Natural killer cell (primary cell): ENCODE measurements at regions of chr14 and their contacts with region 1.

Region 1: DNA sequence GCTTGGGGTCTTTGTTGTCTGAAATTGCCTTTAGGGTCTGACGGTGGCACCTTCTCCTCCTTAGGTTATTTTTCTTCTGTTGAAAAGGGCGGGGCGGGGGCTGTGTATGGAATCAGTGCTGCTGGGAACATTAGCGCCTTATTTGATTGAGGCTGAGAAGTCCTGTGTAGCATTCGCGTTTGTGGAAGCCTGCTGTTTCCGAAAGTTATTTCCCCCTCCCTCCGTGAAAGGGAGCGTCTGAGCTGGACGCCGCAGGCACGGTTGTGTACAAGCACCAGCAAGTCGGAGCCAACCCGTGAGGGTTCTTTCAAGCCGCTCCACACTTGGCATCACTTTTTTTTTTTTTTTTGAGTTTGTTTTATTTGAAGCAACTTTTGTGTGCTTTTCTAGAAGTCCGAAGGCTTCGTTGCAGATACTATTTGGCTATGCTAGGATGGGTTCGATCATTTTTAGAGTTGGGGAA is 1.1 kb downstream of the SYNE2 start:
- DNase-seq: peak; percentile 52 to 77
- ATAC-seq: peak; percentile 27 to 48 (median 32)
- H3K4me3 ChIP-seq: peak overlapping the region; percentile 65
- H3K4me3 Mint-ChIP-seq: peak overlapping the region; percentile 99
- H3K27ac ChIP-seq: peak overlapping the region; percentile 76
- H3K27ac Mint-ChIP-seq: peak overlapping the region; percentile 93 to 96
- H3K4me1 ChIP-seq: peaks cover 42% of the 10 kb centered on the region
- H3K4me1 Mint-ChIP-seq: peaks cover 42 to 48% of the 10 kb centered on the region in 2 donors
- H3K27me3 ChIP-seq: no peaks in the 10 kb centered on the region
- H3K27me3 Mint-ChIP-seq: no peaks in the 10 kb centered on the region
- CTCF ChIP-seq: no peak

Region 2: DNA sequence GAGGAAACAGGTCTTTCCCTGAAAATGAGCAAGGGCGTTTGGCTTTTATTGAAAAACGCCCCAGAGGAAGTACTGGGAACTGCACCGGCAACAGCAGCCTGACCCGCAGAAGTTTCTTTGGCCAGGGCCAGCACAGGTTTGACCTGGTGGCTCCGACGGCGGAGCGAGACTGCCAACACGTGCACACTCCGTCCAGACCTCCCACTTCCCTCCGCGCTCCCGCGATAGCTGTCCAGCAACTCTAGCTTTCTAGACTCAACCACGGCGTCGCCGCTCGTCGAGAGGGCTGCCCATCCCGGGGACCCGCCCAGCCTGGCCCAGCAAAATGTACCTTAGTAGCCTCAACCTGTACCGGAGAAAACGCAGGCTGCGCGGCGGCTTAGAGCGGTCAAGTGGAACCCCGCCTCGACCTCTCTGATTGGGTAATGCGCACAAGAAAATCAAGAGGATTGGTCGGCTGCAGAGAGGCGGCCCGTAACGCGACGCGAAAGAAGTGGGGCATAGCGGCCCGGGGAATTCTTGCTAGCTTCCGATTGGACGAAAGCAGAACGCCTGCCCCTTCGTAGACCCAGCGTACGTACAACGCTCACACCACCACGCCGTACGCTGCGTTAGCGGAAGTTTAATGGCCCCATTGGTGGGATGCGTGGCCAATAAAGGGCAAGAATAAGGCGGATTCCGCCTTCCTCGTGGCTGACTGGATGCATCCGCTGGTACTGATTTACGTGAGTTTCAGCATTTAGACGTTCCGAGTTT is 212.2 kb before region 1 on chr14 and contains the start of gene WDR89:
- intact Hi-C with region 1: loop called (anchors 2 kb)
- DNase-seq: peak; percentile 92 to 99
- ATAC-seq: peak; percentile 79 to 92 (median 81)
- H3K4me3 ChIP-seq: peak within 1 kb of the TSS; percentile 90
- H3K4me3 Mint-ChIP-seq: peak within 1 kb of the TSS; percentile 92
- H3K27ac ChIP-seq: peak within 1 kb of the TSS; percentile 99
- H3K27ac Mint-ChIP-seq: peak within 1 kb of the TSS; percentile 95 to 96
- H3K4me1 ChIP-seq: peaks cover 11% of the 10 kb centered on the region
- H3K4me1 Mint-ChIP-seq: peaks cover 22 to 28% of the 10 kb centered on the region in 2 donors
- H3K27me3 ChIP-seq: no peaks in the 10 kb centered on the region
- H3K27me3 Mint-ChIP-seq: no peaks in the 10 kb centered on the region
- CTCF ChIP-seq: peak; percentile 70
- total RNA-seq, gene WDR89: 9.6 to 13.4 (median 10.7) TPM

Region 3: GRCh38 chr14:63867933-63868921 is 14.4 kb after region 1 on chr14:
- intact Hi-C with region 1: loop called (anchors 1 kb)
- DNase-seq: peak in 1 of 2 donors; percentile 64
- ATAC-seq: no peak
- H3K4me3 ChIP-seq: no peak overlapping the region
- H3K4me3 Mint-ChIP-seq: peak overlapping the region; percentile 75
- H3K27ac ChIP-seq: peak overlapping the region; percentile 46
- H3K27ac Mint-ChIP-seq: peak overlapping the region; percentile 89 to 93
- H3K4me1 ChIP-seq: peaks cover 38% of the 10 kb centered on the region
- H3K4me1 Mint-ChIP-seq: peaks cover 59 to 62% of the 10 kb centered on the region in 2 donors
- H3K27me3 ChIP-seq: no peaks in the 10 kb centered on the region
- H3K27me3 Mint-ChIP-seq: no peaks in the 10 kb centered on the region
- CTCF ChIP-seq: no peak

Region 4: GRCh38 chr14:63901434-63902085 is 47.7 kb after region 1 on chr14:
- intact Hi-C with region 1: loop called (anchors 2 kb)
- DNase-seq: peak; percentile 29 to 31
- ATAC-seq: peak; percentile 46 to 63 (median 55)
- H3K4me3 ChIP-seq: no peak overlapping the region
- H3K4me3 Mint-ChIP-seq: peak overlapping the region; percentile 68
- H3K27ac ChIP-seq: peak overlapping the region; percentile 45
- H3K27ac Mint-ChIP-seq: peak overlapping the region; percentile 67 to 97
- H3K4me1 ChIP-seq: peaks cover 30% of the 10 kb centered on the region
- H3K4me1 Mint-ChIP-seq: peaks cover 72 to 76% of the 10 kb centered on the region in 2 donors
- H3K27me3 ChIP-seq: no peaks in the 10 kb centered on the region
- H3K27me3 Mint-ChIP-seq: no peaks in the 10 kb centered on the region
- CTCF ChIP-seq: no peak